Heart right ventricle (tissue), 16 donors: ENCODE measurements at regions of chr1 and their contacts with region 1.

Region 1: GRCh38 chr1:171141688-171142415 is 43.2 kb upstream of the FMO2 start:
- DNase-seq: peak; percentile 29 to 71
- ATAC-seq: peak; percentile 78 to 93 (median 86)
- H3K4me3 ChIP-seq: peak overlapping the region in 4 of 10 donors; percentile 13 to 24 (median 16)
- H3K27ac ChIP-seq: peak overlapping the region; percentile 72 to 95 (median 86)
- H3K4me1 ChIP-seq: peaks cover 11 to 91% (median 53%) of the 10 kb centered on the region in 9 donors
- H3K27me3 ChIP-seq: no peaks in the 10 kb centered on the region
- CTCF ChIP-seq: peak in 5 of 9 donors; percentile 21 to 59 (median 44)

Region 2: DNA sequence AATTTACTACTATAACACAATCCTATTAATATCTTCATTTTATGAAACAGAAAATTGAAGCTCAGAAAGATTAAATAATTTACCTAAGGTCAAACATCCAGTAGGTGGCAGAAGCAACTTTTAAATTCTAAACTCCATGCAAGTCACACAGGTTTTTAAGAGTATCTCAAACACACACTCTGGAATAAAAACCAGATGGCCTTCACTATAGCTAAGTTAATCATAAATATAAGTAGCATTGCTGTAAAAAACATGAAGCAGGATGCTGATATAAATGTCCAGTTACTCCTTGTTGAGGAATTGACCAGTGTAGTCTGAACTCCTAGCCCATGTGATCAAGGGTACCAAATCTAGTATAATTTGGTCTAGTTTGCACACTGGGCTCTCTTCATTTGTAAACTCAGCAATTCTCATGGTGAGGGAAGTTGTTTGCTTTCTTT is 60.5 kb before region 1 on chr1:
- intact Hi-C with region 1: loop called in 1 of 10 experiments (anchors 10 kb)
- DNase-seq: no peak
- ATAC-seq: peak in 7 of 8 donors; percentile 38 to 65 (median 56)
- H3K4me3 ChIP-seq: no peak overlapping the region
- H3K27ac ChIP-seq: peak overlapping the region in 8 of 10 donors; percentile 9 to 71 (median 48)
- H3K4me1 ChIP-seq: peaks cover 0 to 42% (median 10%) of the 10 kb centered on the region in 9 donors
- H3K27me3 ChIP-seq: no peaks in the 10 kb centered on the region
- CTCF ChIP-seq: peak; percentile 27 to 74 (median 59)

Region 3: DNA sequence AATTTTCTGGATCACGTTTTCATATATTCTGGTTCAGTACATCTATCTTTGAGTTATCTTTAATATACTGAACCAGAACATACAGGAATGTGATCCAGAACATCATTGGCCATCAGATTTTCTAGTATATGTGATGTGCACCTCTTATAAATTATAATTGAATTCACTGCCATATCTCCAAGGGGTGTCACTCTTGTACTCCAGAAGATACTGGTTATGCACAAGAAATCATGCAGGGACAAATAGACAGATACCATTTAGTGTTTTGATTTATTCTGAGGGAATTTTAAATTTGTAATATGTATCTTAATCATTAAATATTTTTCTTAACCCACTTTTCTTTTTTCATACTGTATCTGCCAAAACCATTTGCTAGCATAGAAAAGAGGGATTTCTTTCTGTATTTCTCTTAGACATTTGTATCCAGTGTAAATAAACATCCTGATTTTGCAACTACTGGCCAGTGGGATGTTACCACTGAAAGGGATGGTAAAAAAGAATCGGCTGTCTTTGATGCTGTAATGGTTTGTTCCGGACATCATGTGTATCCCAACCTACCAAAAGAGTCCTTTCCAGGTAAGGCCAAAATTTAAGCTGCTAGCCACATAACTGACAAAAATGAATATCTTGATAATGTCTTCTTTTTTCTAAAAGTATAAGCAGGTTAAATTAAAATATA is 34.5 kb before region 1 on chr1:
- intact Hi-C with region 1: loop called in 1 of 10 experiments (anchors 5 kb)
- DNase-seq: no peak
- ATAC-seq: peak in 4 of 8 donors; percentile 53 to 68 (median 62)
- H3K4me3 ChIP-seq: no peak overlapping the region
- H3K27ac ChIP-seq: peak overlapping the region in 4 of 10 donors; percentile 18 to 45 (median 32)
- H3K4me1 ChIP-seq: peaks cover 0 to 48% (median 5%) of the 10 kb centered on the region in 9 donors
- H3K27me3 ChIP-seq: no peaks in the 10 kb centered on the region
- CTCF ChIP-seq: peak in 5 of 9 donors; percentile 40 to 55 (median 44)

Region 4: DNA sequence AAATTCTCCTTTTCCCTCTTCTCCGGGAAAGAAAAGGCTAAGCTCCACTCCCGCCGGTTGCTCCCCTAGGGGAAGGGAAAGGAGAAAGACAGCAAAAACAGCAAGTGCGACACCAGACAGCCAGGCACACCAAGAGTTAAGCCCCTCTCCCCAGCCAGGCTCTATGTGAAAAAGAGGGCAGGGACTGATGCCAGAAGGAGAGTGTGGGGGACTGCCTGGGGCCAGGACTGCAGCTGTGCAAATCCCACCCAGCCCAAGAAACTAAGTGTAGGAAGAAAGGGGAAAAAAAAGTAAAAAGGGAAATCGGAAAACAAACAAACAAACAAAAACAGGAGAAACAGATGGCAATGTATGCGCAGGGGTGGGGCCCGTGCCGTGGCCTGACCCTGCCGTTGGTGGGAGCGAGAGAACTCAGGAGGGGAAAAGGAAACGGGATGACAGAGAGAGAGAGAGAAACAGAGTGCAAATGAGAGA is 78.8 kb after region 1 on chr1:
- intact Hi-C with region 1: loop called in 1 of 10 experiments (anchors 2 kb)
- DNase-seq: no peak
- ATAC-seq: peak in 7 of 8 donors; percentile 38 to 67 (median 48)
- H3K4me3 ChIP-seq: peak overlapping the region in 3 of 10 donors; percentile 10 to 25 (median 16)
- H3K27ac ChIP-seq: peak overlapping the region; percentile 22 to 85 (median 66)
- H3K4me1 ChIP-seq: peaks cover 0 to 56% (median 26%) of the 10 kb centered on the region in 9 donors
- H3K27me3 ChIP-seq: no peaks in the 10 kb centered on the region
- CTCF ChIP-seq: no peak

Region 5: GRCh38 chr1:171251042-171251951 is 109.4 kb after region 1 on chr1:
- intact Hi-C with region 1: no loop called
- DNase-seq: peak; percentile 16 to 27
- ATAC-seq: peak in 7 of 8 donors; percentile 26 to 61 (median 53)
- H3K4me3 ChIP-seq: peak overlapping the region; percentile 18 to 64 (median 58)
- H3K27ac ChIP-seq: peak overlapping the region in 1 of 10 donors; percentile 14
- H3K4me1 ChIP-seq: peaks cover 0 to 16% (median 4%) of the 10 kb centered on the region in 9 donors
- H3K27me3 ChIP-seq: peaks cover 0 to 29% (median 14%) of the 10 kb centered on the region in 7 donors
- CTCF ChIP-seq: peak; percentile 21 to 59 (median 54)